Activated CD4-positive, alpha-beta T cell treated with anti-CD3 and anti-CD28 coated beads for 36 hours (primary cell): ENCODE measurements at regions of chr1 and their contacts with region 1.

Region 1: GRCh38 chr1:79711001-79711431 is 704.5 kb upstream of the ADGRL4 start:
- DNase-seq: no peak
- ATAC-seq: no peak
- H3K4me3 Mint-ChIP-seq: no peak overlapping the region
- H3K27ac Mint-ChIP-seq: no peak overlapping the region
- H3K4me1 Mint-ChIP-seq: no peaks in the 10 kb centered on the region
- H3K27me3 Mint-ChIP-seq: no peaks in the 10 kb centered on the region

Region 2: GRCh38 chr1:79646895-79647294 is 64.1 kb before region 1 on chr1:
- CTCF ChIA-PET with region 1: no interaction called
- POLR2A ChIA-PET with region 1: no interaction called
- intact Hi-C with region 1: no loop called
- DNase-seq: no peak
- ATAC-seq: no peak
- H3K4me3 Mint-ChIP-seq: no peak overlapping the region
- H3K27ac Mint-ChIP-seq: no peak overlapping the region
- H3K4me1 Mint-ChIP-seq: no peaks in the 10 kb centered on the region
- H3K27me3 Mint-ChIP-seq: no peaks in the 10 kb centered on the region

Region 3: DNA sequence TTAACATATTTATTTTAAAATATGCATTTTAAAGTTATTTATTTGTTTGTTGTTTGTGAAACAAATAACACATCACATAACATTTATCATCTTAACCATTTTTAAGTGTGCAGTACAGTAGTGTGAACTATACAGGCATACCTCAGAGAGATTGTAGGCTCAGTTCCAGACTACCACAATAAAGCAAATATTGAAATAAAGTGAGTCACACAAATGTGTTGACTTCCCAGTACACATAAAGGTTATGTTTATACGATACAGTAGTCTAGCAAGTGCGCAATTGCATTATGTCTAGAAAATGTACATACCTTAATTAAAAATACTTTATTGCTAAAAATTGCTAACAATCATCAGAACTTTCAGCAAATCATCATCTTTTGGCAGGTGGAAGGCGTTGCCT is 34.9 kb after region 1 on chr1:
- CTCF ChIA-PET with region 1: no interaction called
- POLR2A ChIA-PET with region 1: no interaction called
- intact Hi-C with region 1: no loop called
- DNase-seq: no peak
- ATAC-seq: no peak
- H3K4me3 Mint-ChIP-seq: no peak overlapping the region
- H3K27ac Mint-ChIP-seq: no peak overlapping the region
- H3K4me1 Mint-ChIP-seq: no peaks in the 10 kb centered on the region
- H3K27me3 Mint-ChIP-seq: no peaks in the 10 kb centered on the region

Region 4: GRCh38 chr1:79777481-79778219 is 66.6 kb after region 1 on chr1:
- CTCF ChIA-PET with region 1: no interaction called
- POLR2A ChIA-PET with region 1: no interaction called
- intact Hi-C with region 1: loop called in 1 of 2 experiments (anchors 10 kb)
- DNase-seq: no peak
- ATAC-seq: no peak
- H3K4me3 Mint-ChIP-seq: no peak overlapping the region
- H3K27ac Mint-ChIP-seq: no peak overlapping the region
- H3K4me1 Mint-ChIP-seq: no peaks in the 10 kb centered on the region
- H3K27me3 Mint-ChIP-seq: no peaks in the 10 kb centered on the region